Naive thymus-derived CD8-positive, alpha-beta T cell (primary cell): ENCODE measurements at regions of chr16 and their contacts with region 1.

Region 1: DNA sequence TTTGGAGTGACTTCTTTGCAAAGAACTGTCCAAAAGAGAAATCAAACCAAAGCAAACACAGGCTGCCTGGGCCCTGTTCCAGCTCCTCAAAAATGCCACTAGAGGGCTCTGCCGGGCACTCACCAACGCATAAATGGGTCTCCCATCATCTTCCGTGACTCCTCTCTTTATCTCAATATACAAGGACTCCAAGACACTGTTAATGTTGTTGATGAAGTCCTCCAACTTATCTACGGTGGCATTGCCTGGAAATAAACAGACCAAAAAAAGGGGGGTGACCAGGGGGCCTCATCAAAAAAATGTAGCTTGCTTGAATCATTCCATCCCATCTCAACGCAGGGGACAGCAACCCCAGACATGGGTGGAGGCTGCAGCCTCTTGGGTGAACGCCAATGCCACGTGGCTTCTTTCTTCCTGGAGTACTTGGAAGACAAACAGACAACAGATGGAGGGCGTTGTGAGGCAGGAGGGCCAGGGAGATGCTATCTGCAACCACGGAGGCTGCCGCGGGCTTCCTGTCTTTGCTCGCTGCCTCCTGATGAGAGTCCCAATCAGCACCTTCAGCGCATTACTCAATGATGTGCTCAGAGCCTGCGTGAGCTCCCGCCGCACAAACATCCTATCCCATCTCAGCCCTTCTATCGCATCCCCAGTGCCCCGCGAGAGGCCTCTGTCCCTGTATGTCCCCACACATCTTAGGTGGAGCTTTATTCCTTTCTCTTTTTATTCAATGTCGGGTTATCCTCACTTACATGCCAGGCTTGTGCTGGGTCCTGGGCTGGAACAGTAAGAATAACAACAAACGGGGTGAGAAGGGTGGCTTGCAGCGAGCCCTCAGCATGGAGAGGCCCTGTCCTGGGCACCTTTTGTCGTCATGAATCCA is 32.0 kb downstream of the KDM8 start:
- DNase-seq: peak; percentile 73 to 97 (median 94)
- ATAC-seq: peak; percentile 60 to 77
- H3K4me3 Mint-ChIP-seq: peak overlapping the region; percentile 66 to 91 (median 84)
- H3K27ac Mint-ChIP-seq: peak overlapping the region; percentile 98 to 100 (median 98)
- H3K4me1 Mint-ChIP-seq: peaks cover 57 to 99% (median 96%) of the 10 kb centered on the region in 4 donors
- H3K27me3 Mint-ChIP-seq: no peaks in the 10 kb centered on the region

Region 2: GRCh38 chr16:27169511-27170071 is 65.7 kb before region 1 on chr16:
- POLR2A ChIA-PET with region 1: interaction called, 12 read pairs
- DNase-seq: peak; percentile 34 to 91 (median 82)
- ATAC-seq: peak; percentile 92
- H3K4me3 Mint-ChIP-seq: peak overlapping the region; percentile 48 to 80 (median 68)
- H3K27ac Mint-ChIP-seq: peak overlapping the region; percentile 70 to 98 (median 96)
- H3K4me1 Mint-ChIP-seq: peaks cover 26 to 73% (median 67%) of the 10 kb centered on the region in 4 donors
- H3K27me3 Mint-ChIP-seq: no peaks in the 10 kb centered on the region

Region 3: DNA sequence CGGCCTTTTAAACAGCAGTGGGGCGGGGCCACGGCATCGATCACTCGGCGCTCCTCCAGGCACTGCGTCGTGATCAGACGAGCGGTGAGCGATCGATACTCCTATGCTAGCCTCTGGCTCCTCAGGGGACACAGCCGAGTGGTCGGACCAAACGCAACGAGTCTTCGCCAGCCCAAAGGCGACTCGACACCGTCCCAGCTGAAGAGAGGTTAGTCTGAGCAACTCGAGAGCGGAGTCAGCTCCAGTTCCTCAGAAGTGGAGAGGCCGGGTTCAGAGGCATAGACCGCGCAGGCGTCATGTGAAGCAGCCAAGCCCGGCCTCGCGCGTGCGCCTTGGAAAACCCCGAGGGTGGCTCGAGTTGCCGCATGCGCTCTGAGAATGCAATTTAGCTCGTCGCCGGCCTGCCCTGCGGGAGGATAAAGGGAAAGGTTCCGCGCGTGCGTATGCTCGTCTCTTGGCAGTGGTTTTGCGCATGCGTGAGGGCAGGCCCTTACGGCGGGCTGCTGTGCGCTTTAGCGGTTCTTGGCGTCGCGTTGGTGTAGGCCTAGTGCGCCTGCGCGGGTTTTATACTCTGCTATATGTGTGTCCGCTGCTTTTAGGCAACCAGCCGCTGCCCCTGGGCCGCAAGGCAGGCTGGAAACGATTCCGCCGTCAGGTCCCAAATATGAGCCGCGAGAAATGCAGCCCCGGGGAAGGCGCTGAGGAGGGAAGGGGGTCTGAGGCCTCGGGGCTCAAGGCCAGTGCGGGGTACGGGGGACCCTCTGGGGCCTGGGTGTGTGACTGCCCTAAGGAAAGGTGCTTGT is 31.7 kb before region 1 on chr16 and contains the start of gene KDM8:
- POLR2A ChIA-PET with region 1: interaction called, 133 read pairs
- DNase-seq: peak; percentile 98 to 100 (median 100)
- ATAC-seq: peak; percentile 79 to 83
- H3K4me3 Mint-ChIP-seq: peak within 1 kb of the TSS; percentile 85 to 100 (median 98)
- H3K27ac Mint-ChIP-seq: peak within 1 kb of the TSS; percentile 97 to 100 (median 100)
- H3K4me1 Mint-ChIP-seq: peaks cover 21 to 70% (median 61%) of the 10 kb centered on the region in 4 donors
- H3K27me3 Mint-ChIP-seq: peaks cover 0 to 3% (median 0%) of the 10 kb centered on the region in 5 donors
- polyA plus RNA-seq, gene KDM8: 3.8 to 6.2 (median 5.6) TPM

Region 4: DNA sequence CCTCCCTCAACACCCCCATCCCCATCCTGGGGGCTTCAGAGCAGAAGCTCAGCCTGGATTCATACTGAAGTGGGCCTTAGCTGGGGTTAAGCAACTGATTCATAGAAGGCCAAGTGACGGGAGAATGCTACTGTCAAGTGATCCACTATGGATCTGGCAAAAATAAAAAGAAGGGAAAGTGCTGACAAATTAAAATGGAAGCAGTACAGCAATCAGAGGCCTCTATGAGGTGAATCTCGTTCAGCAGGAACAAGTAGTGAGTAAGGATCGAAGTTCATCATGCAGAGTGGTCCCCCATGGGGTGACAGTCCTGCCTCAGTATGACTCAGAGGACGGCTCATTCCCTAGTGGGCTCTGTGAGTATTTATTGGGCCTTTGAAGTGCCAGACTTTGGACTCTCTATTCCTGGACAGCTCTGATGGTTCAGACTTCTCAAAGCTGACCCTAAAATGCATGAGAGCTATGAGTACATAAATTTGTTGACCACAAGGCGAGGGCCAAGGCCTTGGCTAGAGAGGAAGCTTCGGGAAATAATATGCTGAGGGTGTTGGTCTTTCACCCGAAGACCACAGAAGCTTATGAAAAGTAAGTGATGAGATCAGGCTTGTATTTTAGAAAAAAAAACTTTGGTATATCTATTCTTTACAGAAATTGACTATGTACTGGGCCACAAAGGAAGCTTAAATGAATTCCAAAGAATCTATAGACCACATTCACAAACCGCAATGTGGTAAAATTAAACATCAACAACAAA is 38.6 kb after region 1 on chr16:
- POLR2A ChIA-PET with region 1: interaction called, 54 read pairs
- DNase-seq: peak in 3 of 10 donors; percentile 38 to 54 (median 45)
- ATAC-seq: peak; percentile 75 to 77
- H3K4me3 Mint-ChIP-seq: peak overlapping the region; percentile 10 to 85 (median 71)
- H3K27ac Mint-ChIP-seq: peak overlapping the region; percentile 76 to 94 (median 86)
- H3K4me1 Mint-ChIP-seq: peaks cover 29 to 62% (median 44%) of the 10 kb centered on the region in 4 donors
- H3K27me3 Mint-ChIP-seq: no peaks in the 10 kb centered on the region

Region 5: DNA sequence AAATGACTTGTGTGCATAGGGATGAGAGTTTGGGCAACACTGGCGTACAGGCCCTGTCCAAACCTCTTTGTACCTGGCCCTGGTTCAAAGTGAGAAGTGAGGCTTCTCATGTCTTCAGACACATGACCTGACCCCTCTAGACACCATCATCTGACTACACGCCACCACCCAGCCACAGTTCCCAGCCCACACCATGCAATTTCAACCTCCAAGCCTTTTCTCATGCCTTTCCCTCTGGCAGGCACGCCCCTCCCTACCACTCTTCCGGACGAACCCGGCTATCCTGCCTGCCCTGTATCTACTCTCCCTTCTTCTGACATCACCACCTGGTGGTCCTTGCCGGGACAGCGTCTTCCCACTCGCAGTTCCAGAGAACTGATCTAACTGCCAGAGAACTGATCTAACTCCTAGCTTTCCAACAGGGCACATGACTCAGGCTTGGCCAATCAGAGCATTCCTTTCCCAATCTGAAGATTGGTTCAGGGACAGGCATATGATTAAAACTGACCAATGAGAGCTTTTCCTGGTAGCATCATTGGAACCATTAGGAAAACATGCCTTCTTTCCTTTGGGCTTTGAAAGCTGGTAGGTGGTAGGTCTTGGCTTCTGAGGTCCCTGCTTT is 139.6 kb after region 1 on chr16:
- POLR2A ChIA-PET with region 1: interaction called, 29 read pairs
- DNase-seq: peak in 5 of 10 donors; percentile 23 to 43 (median 38)
- ATAC-seq: peak; percentile 24 to 39
- H3K4me3 Mint-ChIP-seq: no peak overlapping the region
- H3K27ac Mint-ChIP-seq: no peak overlapping the region
- H3K4me1 Mint-ChIP-seq: peaks cover 24 to 51% (median 37%) of the 10 kb centered on the region in 4 donors
- H3K27me3 Mint-ChIP-seq: no peaks in the 10 kb centered on the region

Region 6: GRCh38 chr16:27461483-27462171 is 226.3 kb after region 1 on chr16:
- POLR2A ChIA-PET with region 1: interaction called, 69 read pairs
- DNase-seq: no peak
- ATAC-seq: no peak
- H3K4me3 Mint-ChIP-seq: peak overlapping the region in 7 of 10 donors; percentile 27 to 75 (median 37)
- H3K27ac Mint-ChIP-seq: peak overlapping the region in 9 of 10 donors; percentile 43 to 99 (median 88)
- H3K4me1 Mint-ChIP-seq: peaks cover 39 to 86% (median 68%) of the 10 kb centered on the region in 4 donors
- H3K27me3 Mint-ChIP-seq: no peaks in the 10 kb centered on the region

Region 7: GRCh38 chr16:27646806-27647205 is 411.5 kb after region 1 on chr16:
- POLR2A ChIA-PET with region 1: no interaction called
- DNase-seq: no peak
- ATAC-seq: no peak
- H3K4me3 Mint-ChIP-seq: no peak overlapping the region
- H3K27ac Mint-ChIP-seq: no peak overlapping the region
- H3K4me1 Mint-ChIP-seq: peaks cover 0 to 3% (median 0%) of the 10 kb centered on the region in 4 donors
- H3K27me3 Mint-ChIP-seq: no peaks in the 10 kb centered on the region